Cardiac septum (tissue), 1 donor: ENCODE measurements at regions of chr19 and their contacts with region 1.

Region 1: DNA sequence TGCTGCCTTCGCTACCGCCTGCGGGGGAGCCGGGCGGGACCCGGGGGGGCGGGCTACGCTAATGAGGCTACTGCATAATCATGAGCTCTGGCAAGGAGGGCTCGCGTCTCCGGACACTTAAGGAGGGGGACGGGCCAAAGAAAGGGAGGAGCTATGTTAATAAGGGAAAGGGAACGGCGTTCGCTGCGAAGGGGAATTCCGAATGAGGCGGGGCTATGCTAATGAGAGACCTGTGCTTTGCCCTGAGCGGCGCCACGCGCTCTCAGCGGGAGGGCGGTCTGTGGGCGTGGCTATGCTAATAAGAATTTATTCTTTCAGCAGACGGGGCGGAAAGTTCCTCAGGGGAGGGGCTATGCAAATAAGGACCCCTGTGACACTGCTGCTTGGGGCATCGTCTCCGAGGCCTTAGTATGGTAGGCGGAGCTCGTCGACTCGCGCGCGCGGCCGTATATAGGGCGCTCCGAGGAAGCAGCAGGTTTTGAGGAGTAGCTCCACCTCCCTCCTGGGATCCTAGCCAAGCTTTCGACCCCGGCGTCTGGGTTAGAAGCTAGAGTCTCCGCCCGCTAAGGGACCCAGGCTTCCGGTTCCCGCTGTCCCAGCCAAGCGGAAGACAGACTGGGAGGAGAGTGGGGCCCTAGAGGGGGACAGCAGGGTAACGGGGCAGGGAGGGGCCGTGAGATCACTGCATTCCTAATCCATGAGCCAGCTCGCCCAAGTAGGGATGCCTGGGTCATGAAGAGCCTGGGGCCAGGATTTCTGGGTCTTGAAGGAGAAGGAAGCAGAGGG is at the start of gene RRAS:
- DNase-seq: peak; percentile 100
- total RNA-seq, gene RRAS: 171 TPM

Region 2: DNA sequence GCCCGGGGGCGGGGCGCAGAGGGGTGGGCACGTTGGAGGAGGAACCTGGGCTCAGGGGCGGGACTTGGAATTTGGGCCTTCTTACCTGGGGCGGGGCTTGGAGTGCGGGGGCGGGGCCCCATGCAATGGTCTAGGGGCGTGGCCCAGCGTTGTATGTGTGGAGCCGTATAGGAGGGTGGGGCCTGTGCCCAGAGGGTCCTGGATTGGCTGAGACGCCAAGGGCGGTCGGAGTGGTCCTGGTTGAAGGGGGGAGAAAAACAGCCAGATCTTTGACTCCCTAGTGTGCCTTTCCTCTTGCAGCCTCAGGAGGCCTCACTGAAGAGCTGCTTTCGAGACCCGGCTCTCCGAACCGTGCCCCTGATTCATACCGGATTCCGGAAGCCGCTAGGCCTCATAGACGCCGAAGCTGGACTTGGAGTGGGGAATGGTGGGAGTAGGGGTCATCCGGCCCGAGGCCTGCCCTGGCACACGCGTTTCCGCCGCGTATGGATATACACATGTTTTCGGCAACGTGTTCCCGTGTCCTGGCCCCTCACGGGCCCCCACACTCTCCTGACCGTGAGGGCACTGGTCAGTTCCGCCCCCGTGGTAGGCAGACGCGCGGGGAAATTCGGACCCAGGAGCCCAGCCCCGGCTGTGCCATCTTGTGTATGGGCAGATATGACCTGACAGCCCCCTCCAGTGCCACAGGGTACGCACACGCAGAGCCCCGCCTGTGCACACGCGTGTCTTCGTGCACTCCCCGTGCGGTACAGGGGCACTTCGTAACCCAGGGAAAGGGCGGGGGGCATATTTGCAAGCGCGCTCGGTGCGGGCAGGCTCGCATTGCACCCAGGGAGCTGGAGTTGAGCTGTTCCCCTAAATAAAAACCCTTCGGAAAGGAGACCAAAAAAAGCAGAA is 50.0 kb before region 1 on chr19:
- intact Hi-C with region 1: loop called (anchors 2 kb)
- DNase-seq: peak; percentile 96

Region 3: GRCh38 chr19:49665351-49666119 is 25.2 kb after region 1 on chr19 and contains the starts of genes BCL2L12 and IRF3:
- intact Hi-C with region 1: loop called (anchors 2 kb)
- DNase-seq: peak; percentile 99
- total RNA-seq, gene BCL2L12: 8.9 TPM
- total RNA-seq, gene IRF3: 33.7 TPM

Region 4: GRCh38 chr19:49676690-49677231 is 36.5 kb after region 1 on chr19:
- intact Hi-C with region 1: loop called (anchors 2 kb)
- DNase-seq: peak; percentile 100

Region 5: GRCh38 chr19:49701271-49701786 is 61.0 kb after region 1 on chr19:
- intact Hi-C with region 1: no loop called
- DNase-seq: no peak